ENCODE measurements at regions of chr14 and their contacts with region 1.

Region 1: GRCh38 chr14:71320107-71320733 is 413.0 kb downstream of the PCNX1 start:
- DNase-seq: peak; percentile 100
- H3K4me3 Mint-ChIP-seq: peak within 1 kb of the TSS; percentile 96
- H3K27ac Mint-ChIP-seq: peak within 1 kb of the TSS; percentile 99
- H3K4me1 Mint-ChIP-seq: peaks cover 40% of the 10 kb centered on the region
- H3K27me3 Mint-ChIP-seq: no peaks in the 10 kb centered on the region

Region 2: GRCh38 chr14:71021347-71022014 is 298.7 kb before region 1 on chr14:
- intact Hi-C with region 1: loop called (anchors 5 kb)
- DNase-seq: no peak
- H3K4me3 Mint-ChIP-seq: peak overlapping the region; percentile 6
- H3K27ac Mint-ChIP-seq: peak overlapping the region; percentile 85
- H3K4me1 Mint-ChIP-seq: peaks cover 24% of the 10 kb centered on the region
- H3K27me3 Mint-ChIP-seq: no peaks in the 10 kb centered on the region

Region 3: DNA sequence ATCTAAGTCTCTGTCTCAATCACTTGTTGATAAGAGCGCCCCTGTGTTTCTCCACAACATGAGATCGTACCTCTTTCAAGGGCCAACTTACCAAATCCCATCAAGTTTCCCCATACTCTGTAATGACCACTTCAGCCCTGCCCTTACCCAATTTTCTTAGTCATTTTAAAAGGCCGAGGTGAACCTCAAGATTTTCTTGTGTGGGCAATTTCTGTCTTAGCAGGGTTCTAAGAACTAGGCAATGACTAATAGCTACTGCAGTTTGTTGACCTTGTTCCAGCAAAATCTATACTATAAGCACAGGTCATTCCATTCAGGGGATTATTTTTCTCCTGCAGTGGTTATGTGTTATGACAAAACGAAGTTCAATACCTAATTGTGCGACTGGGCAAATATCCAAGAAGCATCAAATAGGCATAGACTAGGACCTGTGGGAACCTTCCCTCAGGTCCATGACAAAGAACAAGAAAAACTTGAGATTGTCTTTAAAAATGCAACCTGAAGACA is 53.2 kb before region 1 on chr14:
- intact Hi-C with region 1: loop called (anchors 1 kb)
- DNase-seq: peak; percentile 67
- H3K4me3 Mint-ChIP-seq: peak overlapping the region; percentile 36
- H3K27ac Mint-ChIP-seq: peak overlapping the region; percentile 63
- H3K4me1 Mint-ChIP-seq: peaks cover 32% of the 10 kb centered on the region
- H3K27me3 Mint-ChIP-seq: peaks cover 9% of the 10 kb centered on the region

Region 4: GRCh38 chr14:71403656-71404055 is 83.4 kb after region 1 on chr14:
- intact Hi-C with region 1: loop called (anchors 5 kb)
- DNase-seq: peak; percentile 81
- H3K4me3 Mint-ChIP-seq: no peak overlapping the region
- H3K27ac Mint-ChIP-seq: peak overlapping the region; percentile 36
- H3K4me1 Mint-ChIP-seq: peaks cover 40% of the 10 kb centered on the region
- H3K27me3 Mint-ChIP-seq: no peaks in the 10 kb centered on the region

Region 5: GRCh38 chr14:71497645-71498086 is 177.4 kb after region 1 on chr14:
- intact Hi-C with region 1: loop called (anchors 5 kb)
- DNase-seq: no peak
- H3K4me3 Mint-ChIP-seq: peak overlapping the region; percentile 20
- H3K27ac Mint-ChIP-seq: peak overlapping the region; percentile 37
- H3K4me1 Mint-ChIP-seq: peaks cover 20% of the 10 kb centered on the region
- H3K27me3 Mint-ChIP-seq: no peaks in the 10 kb centered on the region

Region 6: GRCh38 chr14:71659161-71659560 is 338.9 kb after region 1 on chr14:
- intact Hi-C with region 1: loop called (anchors 5 kb)
- DNase-seq: no peak
- H3K4me3 Mint-ChIP-seq: peak overlapping the region; percentile 40
- H3K27ac Mint-ChIP-seq: peak overlapping the region; percentile 61
- H3K4me1 Mint-ChIP-seq: peaks cover 16% of the 10 kb centered on the region
- H3K27me3 Mint-ChIP-seq: no peaks in the 10 kb centered on the region